ENCODE measurements at regions of chr11 and their contacts with region 1.

Region 1: DNA sequence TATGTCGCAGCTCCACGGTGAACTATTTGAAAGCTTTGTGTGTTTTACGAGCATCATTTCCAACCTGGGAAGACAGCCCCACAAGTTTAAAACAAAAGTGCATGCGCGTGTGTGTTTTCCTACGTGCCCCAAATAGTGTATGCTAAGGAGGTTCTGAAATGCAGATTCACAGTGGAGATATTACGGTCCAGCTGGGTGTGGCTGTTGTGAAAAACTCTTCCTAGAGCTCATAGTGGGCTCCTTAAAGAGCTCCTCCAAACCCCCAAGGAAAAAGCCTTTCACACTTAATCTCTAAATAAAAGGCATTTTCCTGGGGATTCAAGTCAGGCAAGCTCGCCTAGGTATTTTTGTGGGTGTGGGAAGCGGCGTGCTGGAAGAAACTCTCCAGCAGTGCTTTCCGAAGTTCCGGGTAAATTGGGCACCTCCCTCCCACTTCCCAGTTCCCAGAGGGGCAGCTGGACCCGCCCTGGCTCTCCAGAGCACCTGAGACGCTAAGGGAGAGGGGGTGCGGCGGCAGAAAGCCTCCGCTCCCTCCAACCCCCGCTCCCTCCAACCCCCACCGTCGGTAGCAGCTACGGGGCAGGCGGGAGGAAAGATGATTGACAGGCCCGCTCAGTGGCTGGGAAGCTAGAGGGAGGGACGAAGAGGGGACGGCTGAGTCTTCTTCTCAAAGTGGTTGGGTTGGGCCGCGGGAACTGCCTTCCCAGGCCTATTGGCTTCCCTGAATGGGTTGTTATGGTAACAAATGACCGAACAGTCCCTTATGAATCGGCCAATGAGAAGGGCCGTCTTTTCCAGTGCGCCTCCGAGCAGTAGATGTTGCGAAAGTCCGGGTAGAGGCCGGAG is 558 bp upstream of the PCF11 start:
- DNase-seq: peak in 13 of 14 experiments; percentile 47 to 100 (median 97)
- ATAC-seq: peak; percentile 84
- H3K4me3 ChIP-seq: peak overlapping the region; percentile 99
- H3K4me3 Mint-ChIP-seq: peak overlapping the region; percentile 98
- H3K27ac ChIP-seq: peak overlapping the region; percentile 98 to 99
- H3K27ac Mint-ChIP-seq: peak overlapping the region; percentile 100
- H3K4me1 ChIP-seq: peaks cover 16% of the 10 kb centered on the region
- H3K4me1 Mint-ChIP-seq: peaks cover 26% of the 10 kb centered on the region
- H3K27me3 ChIP-seq: no peaks in the 10 kb centered on the region
- H3K27me3 Mint-ChIP-seq: no peaks in the 10 kb centered on the region
- CTCF ChIP-seq: no peak

Region 2: GRCh38 chr11:82900277-82901164 is 255.9 kb before region 1 on chr11 and contains the start of gene PRCP:
- CTCF ChIA-PET with region 1: interaction called, 5 read pairs
- POLR2A ChIA-PET with region 1: interaction called, 208 read pairs
- intact Hi-C with region 1: loop called (anchors 1 to 2 kb)
- DNase-seq: peak; percentile 81 to 97 (median 91)
- ATAC-seq: peak; percentile 72
- H3K4me3 ChIP-seq: peak within 1 kb of the TSS; percentile 74
- H3K4me3 Mint-ChIP-seq: peak within 1 kb of the TSS; percentile 99
- H3K27ac ChIP-seq: peak within 1 kb of the TSS; percentile 94 to 98
- H3K27ac Mint-ChIP-seq: peak within 1 kb of the TSS; percentile 97
- H3K4me1 ChIP-seq: peaks cover 35% of the 10 kb centered on the region
- H3K4me1 Mint-ChIP-seq: peaks cover 42% of the 10 kb centered on the region
- H3K27me3 ChIP-seq: no peaks in the 10 kb centered on the region
- H3K27me3 Mint-ChIP-seq: no peaks in the 10 kb centered on the region
- CTCF ChIP-seq: no peak
- total RNA-seq, gene PRCP: 13.7 to 16.0 TPM

Region 3: DNA sequence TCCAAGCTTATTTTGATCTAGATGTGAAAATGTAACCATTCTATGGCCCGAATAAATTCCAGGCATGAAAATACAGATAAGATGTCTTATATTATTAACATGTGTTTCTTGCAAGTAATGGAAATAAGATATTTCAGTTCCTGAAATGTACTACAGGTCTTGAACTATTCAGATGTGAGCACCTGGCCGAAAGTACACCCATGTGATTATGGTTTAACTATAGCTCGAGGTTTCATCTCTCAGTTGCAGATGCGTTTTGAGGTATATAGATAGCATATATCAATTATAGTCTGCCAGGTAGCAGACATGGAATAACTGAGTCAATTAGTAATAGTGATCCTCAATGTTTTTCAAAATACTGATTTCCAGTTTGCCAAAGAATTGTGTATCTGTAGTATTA is 186.6 kb before region 1 on chr11:
- CTCF ChIA-PET with region 1: no interaction called
- POLR2A ChIA-PET with region 1: interaction called, 12 read pairs
- intact Hi-C with region 1: loop called in 1 of 2 experiments (anchors 5 kb)
- DNase-seq: no peak
- ATAC-seq: peak; percentile 21
- H3K4me3 ChIP-seq: no peak overlapping the region
- H3K4me3 Mint-ChIP-seq: peak overlapping the region; percentile 71
- H3K27ac ChIP-seq: no peak overlapping the region
- H3K27ac Mint-ChIP-seq: peak overlapping the region; percentile 86
- H3K4me1 ChIP-seq: peaks cover 17% of the 10 kb centered on the region
- H3K4me1 Mint-ChIP-seq: peaks cover 54% of the 10 kb centered on the region
- H3K27me3 ChIP-seq: no peaks in the 10 kb centered on the region
- H3K27me3 Mint-ChIP-seq: no peaks in the 10 kb centered on the region
- CTCF ChIP-seq: no peak

Region 4: DNA sequence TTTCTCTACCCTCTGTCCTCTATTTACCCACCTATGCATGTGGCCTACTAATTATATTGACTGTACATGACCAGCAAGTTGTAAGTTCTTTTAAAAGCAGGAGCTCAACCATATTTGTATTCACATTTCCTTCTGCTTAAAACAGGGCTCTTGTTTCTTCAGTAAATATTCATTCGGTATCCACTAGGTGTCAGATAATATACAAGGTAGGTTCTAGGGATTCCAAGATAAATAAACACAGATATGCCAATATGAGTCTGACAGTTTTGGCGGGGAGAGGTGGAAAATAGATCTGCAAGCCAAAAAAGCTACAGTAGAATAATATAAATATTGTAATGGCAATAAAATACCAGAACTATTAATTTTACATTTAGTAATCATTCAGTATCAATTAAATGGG is 69.3 kb before region 1 on chr11:
- CTCF ChIA-PET with region 1: no interaction called
- POLR2A ChIA-PET with region 1: interaction called, 36 read pairs
- intact Hi-C with region 1: no loop called
- DNase-seq: peak in 1 of 14 experiments; percentile 17
- ATAC-seq: peak; percentile 52
- H3K4me3 ChIP-seq: no peak overlapping the region
- H3K4me3 Mint-ChIP-seq: no peak overlapping the region
- H3K27ac ChIP-seq: no peak overlapping the region
- H3K27ac Mint-ChIP-seq: peak overlapping the region; percentile 24
- H3K4me1 ChIP-seq: no peaks in the 10 kb centered on the region
- H3K4me1 Mint-ChIP-seq: peaks cover 20% of the 10 kb centered on the region
- H3K27me3 ChIP-seq: no peaks in the 10 kb centered on the region
- H3K27me3 Mint-ChIP-seq: no peaks in the 10 kb centered on the region
- CTCF ChIP-seq: peak; percentile 30

Region 5: GRCh38 chr11:83168756-83169155 is 12.4 kb after region 1 on chr11:
- CTCF ChIA-PET with region 1: interaction called, 6 read pairs
- POLR2A ChIA-PET with region 1: interaction called, 39 read pairs
- intact Hi-C with region 1: no loop called
- DNase-seq: no peak
- ATAC-seq: no peak
- H3K4me3 ChIP-seq: no peak overlapping the region
- H3K4me3 Mint-ChIP-seq: peak overlapping the region; percentile 53
- H3K27ac ChIP-seq: no peak overlapping the region
- H3K27ac Mint-ChIP-seq: peak overlapping the region; percentile 63
- H3K4me1 ChIP-seq: peaks cover 35% of the 10 kb centered on the region
- H3K4me1 Mint-ChIP-seq: peaks cover 83% of the 10 kb centered on the region
- H3K27me3 ChIP-seq: no peaks in the 10 kb centered on the region
- H3K27me3 Mint-ChIP-seq: no peaks in the 10 kb centered on the region
- CTCF ChIP-seq: no peak

Region 6: DNA sequence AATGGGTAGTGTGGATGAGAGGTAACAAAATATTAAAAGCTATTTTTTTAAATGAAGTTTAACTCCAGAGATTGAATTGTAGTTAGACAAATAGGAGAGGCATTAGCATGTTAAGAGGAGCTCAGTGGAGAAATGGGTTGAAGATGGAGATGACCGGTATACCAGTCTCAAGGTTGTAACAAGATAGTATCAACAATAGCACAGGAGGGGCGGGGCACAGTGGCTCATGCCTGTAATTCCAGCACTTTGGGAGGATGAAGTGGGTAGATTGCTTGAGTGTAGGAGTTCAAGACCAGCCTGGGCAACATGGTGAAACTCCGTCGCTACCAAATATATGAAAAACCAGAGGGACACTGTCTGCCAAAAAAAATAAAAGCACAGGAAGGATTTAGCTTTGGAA is 31.1 kb after region 1 on chr11:
- CTCF ChIA-PET with region 1: no interaction called
- POLR2A ChIA-PET with region 1: interaction called, 29 read pairs
- intact Hi-C with region 1: loop called in 1 of 2 experiments (anchors 2 kb)
- DNase-seq: no peak
- ATAC-seq: no peak
- H3K4me3 ChIP-seq: no peak overlapping the region
- H3K4me3 Mint-ChIP-seq: no peak overlapping the region
- H3K27ac ChIP-seq: no peak overlapping the region
- H3K27ac Mint-ChIP-seq: peak overlapping the region; percentile 61
- H3K4me1 ChIP-seq: peaks cover 7% of the 10 kb centered on the region
- H3K4me1 Mint-ChIP-seq: peaks cover 25% of the 10 kb centered on the region
- H3K27me3 ChIP-seq: no peaks in the 10 kb centered on the region
- H3K27me3 Mint-ChIP-seq: no peaks in the 10 kb centered on the region
- CTCF ChIP-seq: no peak

Region 7: DNA sequence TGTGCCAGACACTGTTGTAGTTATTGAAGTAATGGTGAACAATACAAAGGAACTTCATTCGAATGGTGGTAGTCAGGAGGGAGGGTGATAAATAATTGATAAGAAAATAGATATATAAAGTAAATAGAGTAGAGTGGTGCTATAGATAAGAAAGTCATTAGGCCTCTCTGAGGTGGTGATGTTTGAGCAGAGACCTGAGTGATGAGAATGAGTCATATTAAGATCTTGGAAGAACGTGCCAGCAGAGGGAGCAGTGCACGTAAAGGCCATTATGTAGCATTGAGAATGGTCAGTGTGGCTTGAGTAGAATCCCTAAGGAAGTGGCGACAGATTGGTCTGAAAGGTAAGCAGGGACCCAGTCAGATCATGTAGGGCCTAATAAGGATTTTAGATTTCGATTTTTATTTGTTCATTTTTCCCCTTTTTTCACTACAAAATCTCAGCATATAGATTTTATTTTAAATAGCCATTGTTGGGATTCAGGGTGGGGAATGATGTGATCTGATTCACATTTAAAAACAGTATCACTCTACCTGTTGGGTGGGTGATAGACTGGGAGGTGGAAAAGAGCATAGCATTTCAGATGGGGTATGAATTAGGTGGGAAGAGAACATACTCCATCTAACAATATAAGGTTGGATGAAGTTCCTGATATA is 85.0 kb after region 1 on chr11:
- CTCF ChIA-PET with region 1: no interaction called
- POLR2A ChIA-PET with region 1: no interaction called
- intact Hi-C with region 1: no loop called
- DNase-seq: peak in 3 of 14 experiments; percentile 19 to 32 (median 22)
- ATAC-seq: no peak
- H3K4me3 ChIP-seq: no peak overlapping the region
- H3K4me3 Mint-ChIP-seq: no peak overlapping the region
- H3K27ac ChIP-seq: no peak overlapping the region
- H3K27ac Mint-ChIP-seq: no peak overlapping the region
- H3K4me1 ChIP-seq: no peaks in the 10 kb centered on the region
- H3K4me1 Mint-ChIP-seq: no peaks in the 10 kb centered on the region
- H3K27me3 ChIP-seq: no peaks in the 10 kb centered on the region
- H3K27me3 Mint-ChIP-seq: no peaks in the 10 kb centered on the region
- CTCF ChIP-seq: peak; percentile 52